Calu3 (cell line): ENCODE measurements at regions of chr7 and their contacts with region 1.

Region 1: DNA sequence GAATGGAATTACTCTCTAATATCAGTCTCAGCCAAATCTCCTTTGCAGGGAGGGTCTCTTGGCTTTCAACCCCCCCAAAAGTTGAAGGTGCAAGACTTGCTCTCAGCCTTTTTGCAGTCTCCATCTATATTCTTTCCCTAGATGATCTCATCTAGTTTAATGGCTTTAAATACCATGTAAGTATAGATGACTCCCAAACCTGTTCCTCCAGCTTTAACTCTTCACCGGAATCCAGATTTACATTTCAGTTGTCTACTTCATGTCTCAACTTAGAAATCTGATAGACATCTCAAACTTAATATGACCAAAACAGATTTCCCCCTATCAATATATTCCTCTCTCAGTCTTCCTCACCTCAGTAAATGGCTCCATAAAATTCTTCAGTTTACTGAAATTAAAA is 10.0 kb upstream of the TAS2R41 start:
- DNase-seq: no peak
- H3K4me3 Mint-ChIP-seq: no peak overlapping the region
- H3K27ac Mint-ChIP-seq: no peak overlapping the region
- H3K4me1 Mint-ChIP-seq: peaks cover 25% of the 10 kb centered on the region
- H3K27me3 Mint-ChIP-seq: no peaks in the 10 kb centered on the region
- CTCF ChIP-seq: no peak

Region 2: DNA sequence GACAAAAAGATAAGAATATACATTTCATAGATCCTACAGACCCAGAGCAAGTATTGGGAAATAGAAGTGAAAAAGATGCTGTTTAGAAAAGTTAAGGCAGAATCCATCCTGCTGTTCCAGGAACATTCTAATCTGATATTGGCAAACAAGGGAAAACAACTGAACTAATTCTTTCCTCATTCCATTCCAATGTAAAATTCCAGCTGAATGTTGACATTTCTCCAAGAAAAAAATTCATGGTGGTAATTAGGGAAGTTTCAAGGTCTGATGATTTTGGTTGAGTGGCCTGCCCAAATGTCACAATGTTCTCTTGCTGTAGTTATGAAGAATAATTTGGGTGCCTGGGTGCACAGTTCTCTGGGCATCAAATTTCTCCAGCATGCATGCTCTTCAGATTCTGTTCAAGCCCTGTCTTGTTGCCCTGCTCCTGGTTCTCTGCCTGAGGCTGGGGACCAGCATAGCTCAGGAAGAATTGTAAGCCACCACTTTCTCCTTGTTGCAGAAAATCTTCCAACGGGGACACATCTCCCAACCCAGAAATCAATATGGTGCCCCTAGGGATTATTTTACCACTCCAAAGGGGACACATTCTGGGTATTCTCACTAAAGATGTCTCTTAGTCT is 320.5 kb before region 1 on chr7:
- CTCF ChIA-PET with region 1: no interaction called
- intact Hi-C with region 1: no loop called
- DNase-seq: no peak
- H3K4me3 Mint-ChIP-seq: no peak overlapping the region
- H3K27ac Mint-ChIP-seq: no peak overlapping the region
- H3K4me1 Mint-ChIP-seq: no peaks in the 10 kb centered on the region
- H3K27me3 Mint-ChIP-seq: peaks cover 18% of the 10 kb centered on the region
- CTCF ChIP-seq: no peak

Region 3: DNA sequence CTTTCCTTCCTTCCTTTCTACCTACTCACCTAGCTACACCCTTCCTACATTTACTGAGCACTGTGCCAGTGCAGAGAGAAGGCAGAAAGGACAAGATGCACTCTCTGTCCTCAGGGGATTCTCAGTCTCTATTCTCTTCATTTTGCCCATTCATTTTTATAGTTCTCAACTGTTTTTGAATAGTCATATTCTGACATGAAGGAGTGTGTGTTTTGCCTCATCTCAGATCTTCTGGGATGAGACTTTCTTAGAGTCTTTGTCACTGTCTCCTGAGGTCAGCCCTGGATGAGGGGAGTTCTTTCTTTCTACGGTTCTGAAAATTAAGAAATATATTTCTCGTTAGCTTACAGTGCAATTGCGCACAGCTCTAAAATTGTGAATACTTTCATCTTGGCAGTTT is 130.5 kb before region 1 on chr7:
- CTCF ChIA-PET with region 1: interaction called, 12 read pairs
- intact Hi-C with region 1: no loop called
- DNase-seq: no peak
- H3K4me3 Mint-ChIP-seq: no peak overlapping the region
- H3K27ac Mint-ChIP-seq: no peak overlapping the region
- H3K4me1 Mint-ChIP-seq: peaks cover 25% of the 10 kb centered on the region
- H3K27me3 Mint-ChIP-seq: no peaks in the 10 kb centered on the region
- CTCF ChIP-seq: no peak